IMR-90 (cell line): ENCODE measurements at regions of chr21 and their contacts with region 1.

Region 1: GRCh38 chr21:45209046-45209445 is 78.6 kb downstream of the POFUT2 start:
- DNase-seq: peak; percentile 87
- ATAC-seq: peak; percentile 92
- H3K4me3 ChIP-seq: peak overlapping the region; percentile 15; the same call in 1 of the 2 replicates
- H3K27ac ChIP-seq: peak overlapping the region; percentile 93
- H3K4me1 ChIP-seq: peaks cover 13% of the 10 kb centered on the region
- H3K27me3 ChIP-seq: no peaks in the 10 kb centered on the region
- CTCF ChIP-seq: no peak
- POLR2A ChIP-seq: no peak
- RAD21 ChIP-seq: no peak

Region 2: DNA sequence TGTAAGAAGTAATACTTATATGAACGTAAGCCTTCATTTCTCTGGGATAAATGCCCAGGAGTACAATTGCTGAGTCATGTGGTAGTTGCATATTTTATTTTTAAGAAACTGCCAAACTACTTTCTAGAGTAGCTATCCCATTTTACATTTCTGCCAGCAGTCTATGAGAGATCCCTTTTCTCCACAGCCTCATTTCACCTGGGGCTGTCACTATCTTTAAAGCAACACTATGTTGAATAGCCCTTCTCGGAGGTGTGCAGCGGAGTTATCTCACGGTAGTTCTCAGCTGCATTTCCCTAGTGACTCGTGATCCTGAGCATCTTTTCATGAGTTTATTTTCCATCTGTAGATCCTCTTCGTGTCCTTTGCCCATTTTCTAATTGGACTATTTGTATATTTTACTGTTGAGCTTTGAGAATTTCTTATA is 41.2 kb before region 1 on chr21:
- CTCF ChIA-PET with region 1: no interaction called
- POLR2A ChIA-PET with region 1: no interaction called
- dilution Hi-C with region 1: no loop called
- in situ Hi-C with region 1: no loop called
- intact Hi-C with region 1: no loop called
- DNase-seq: peak; percentile 78
- ATAC-seq: peak; percentile 58
- H3K4me3 ChIP-seq: no peak overlapping the region
- H3K27ac ChIP-seq: peak overlapping the region; percentile 84; the same call in 1 of the 2 replicates
- H3K4me1 ChIP-seq: peaks cover 37% of the 10 kb centered on the region
- H3K27me3 ChIP-seq: no peaks in the 10 kb centered on the region
- CTCF ChIP-seq: no peak
- POLR2A ChIP-seq: no peak
- RAD21 ChIP-seq: no peak

Region 3: DNA sequence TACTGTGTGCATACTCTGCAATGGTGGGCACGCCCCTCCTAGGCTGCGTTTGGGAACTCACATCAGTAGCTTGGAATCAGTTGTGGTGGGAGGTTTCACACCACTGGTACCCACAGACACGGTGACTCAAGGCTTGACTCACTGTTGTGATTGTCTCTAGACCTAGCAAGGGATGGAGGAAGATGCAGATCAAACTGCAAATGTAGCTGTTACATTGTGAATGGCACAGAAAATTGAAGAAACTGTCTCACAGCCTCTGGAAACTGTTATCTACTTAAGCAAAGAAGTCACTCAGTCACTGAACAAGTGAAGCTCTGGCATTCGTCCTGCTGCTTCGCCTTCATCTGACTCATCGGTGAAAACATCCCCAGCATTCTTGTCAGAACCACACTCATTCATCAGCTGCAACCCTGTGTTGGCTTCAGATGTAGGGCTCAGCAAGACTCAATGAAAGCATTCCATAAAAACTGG is 19.2 kb after region 1 on chr21:
- CTCF ChIA-PET with region 1: no interaction called
- POLR2A ChIA-PET with region 1: no interaction called
- dilution Hi-C with region 1: no loop called
- in situ Hi-C with region 1: no loop called
- intact Hi-C with region 1: loop called (anchors 2 kb)
- DNase-seq: peak; percentile 99
- ATAC-seq: peak; percentile 88
- H3K4me3 ChIP-seq: no peak overlapping the region
- H3K27ac ChIP-seq: 0 out of 2 replicates have a peak overlapping the region, but pooled peaks have one; percentile 2
- H3K4me1 ChIP-seq: peaks cover 23% of the 10 kb centered on the region
- H3K27me3 ChIP-seq: no peaks in the 10 kb centered on the region
- CTCF ChIP-seq: no peak
- POLR2A ChIP-seq: no peak
- RAD21 ChIP-seq: no peak

Region 4: GRCh38 chr21:46253610-46254124 is 1044.6 kb after region 1 on chr21:
- CTCF ChIA-PET with region 1: no interaction called
- POLR2A ChIA-PET with region 1: no interaction called
- dilution Hi-C with region 1: no loop called
- in situ Hi-C with region 1: no loop called
- intact Hi-C with region 1: no loop called
- DNase-seq: peak; percentile 24
- ATAC-seq: peak; percentile 39; the same call in 1 of the 2 replicates
- H3K4me3 ChIP-seq: no peak overlapping the region
- H3K27ac ChIP-seq: no peak overlapping the region
- H3K4me1 ChIP-seq: no peaks in the 10 kb centered on the region
- H3K27me3 ChIP-seq: no peaks in the 10 kb centered on the region
- CTCF ChIP-seq: no peak
- POLR2A ChIP-seq: no peak
- RAD21 ChIP-seq: no peak